Left cardiac atrium (tissue), 4 donors: ENCODE measurements at regions of chrX and their contacts with region 1.

Region 1: GRCh38 chrX:133792198-133792953 is 193.0 kb downstream of the GPC3 start:
- DNase-seq: peak; percentile 55
- ATAC-seq: peak; percentile 71 to 78

Region 2: DNA sequence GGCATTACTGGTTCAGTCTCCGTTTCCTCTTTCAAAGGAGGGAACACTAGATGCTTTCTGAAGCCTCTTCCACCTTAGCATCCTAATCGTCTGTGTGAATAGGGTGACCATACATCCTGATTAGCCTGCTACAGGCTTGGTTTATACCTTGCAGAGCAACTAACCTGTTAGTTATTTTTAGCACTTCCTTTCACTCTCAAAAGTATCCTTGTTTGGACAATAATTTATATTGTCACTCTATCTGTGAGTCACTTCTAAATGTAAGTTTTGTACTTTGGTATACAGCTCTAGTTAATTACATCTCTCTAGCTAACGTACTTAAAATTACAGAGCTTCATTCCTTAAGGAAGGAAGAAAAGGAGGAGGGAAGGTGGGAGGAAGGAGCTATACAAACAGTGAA is 18.5 kb after region 1 on chrX:
- intact Hi-C with region 1: no loop called
- DNase-seq: no peak
- ATAC-seq: no peak

Region 3: GRCh38 chrX:133921764-133922389 is 129.5 kb after region 1 on chrX:
- intact Hi-C with region 1: loop called in 1 of 2 experiments (anchors 5 kb)
- DNase-seq: peak; percentile 28
- ATAC-seq: no peak

Region 4: GRCh38 chrX:134026565-134027311 is 234.4 kb after region 1 on chrX:
- intact Hi-C with region 1: loop called in 1 of 2 experiments (anchors 2 kb)
- DNase-seq: no peak
- ATAC-seq: peak; percentile 41 to 60

Region 5: GRCh38 chrX:134161162-134161561 is 368.8 kb after region 1 on chrX:
- intact Hi-C with region 1: no loop called
- DNase-seq: no peak
- ATAC-seq: no peak

Region 6: DNA sequence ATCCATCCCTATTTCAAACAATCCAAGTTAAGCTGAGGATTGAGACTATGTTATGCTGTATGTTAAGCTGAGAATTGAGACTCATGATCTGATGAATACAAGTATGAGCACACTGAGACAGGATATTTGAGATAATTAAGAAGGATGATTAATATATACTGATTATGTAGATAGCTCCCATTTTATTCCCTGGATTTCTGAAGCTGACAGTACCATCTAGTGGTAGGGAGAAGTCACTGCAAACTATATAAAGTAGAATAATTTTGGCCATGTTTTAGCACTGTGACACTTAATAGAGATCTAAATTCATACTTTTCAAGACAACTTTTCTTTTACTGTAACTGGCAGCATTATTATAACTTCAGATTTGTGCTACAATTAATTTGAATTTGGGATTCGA is 603.8 kb after region 1 on chrX:
- intact Hi-C with region 1: loop called in 1 of 2 experiments (anchors 10 kb)
- DNase-seq: no peak
- ATAC-seq: no peak